Left lung (tissue), 14 donors: ENCODE measurements at regions of chr1 and their contacts with region 1.

Region 1: DNA sequence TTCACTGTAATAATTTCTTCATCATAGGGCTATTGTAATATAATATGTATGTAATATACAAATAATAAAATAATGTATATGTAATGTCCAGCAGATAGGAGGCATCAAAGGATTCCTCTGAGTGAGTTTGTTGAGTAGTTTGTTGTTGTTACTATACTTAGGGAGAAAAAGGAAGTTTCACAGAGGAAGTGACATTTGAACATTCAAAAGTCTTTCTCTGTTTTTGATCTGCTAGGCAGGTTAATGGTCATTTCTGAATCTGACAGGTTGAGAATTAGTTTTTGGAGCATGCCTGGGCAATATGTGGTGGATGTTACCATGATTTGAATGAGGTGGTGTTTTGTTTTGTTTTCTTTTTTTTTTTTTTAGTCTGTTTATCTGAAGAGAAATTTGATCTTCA is 102.1 kb downstream of the NRDC start:
- DNase-seq: no peak
- ATAC-seq: no peak
- H3K4me3 ChIP-seq: no peak overlapping the region
- H3K27ac ChIP-seq: peak overlapping the region in 1 of 2 donors; percentile 10
- H3K4me1 ChIP-seq: peaks cover 0 to 5% of the 10 kb centered on the region in 2 donors
- H3K27me3 ChIP-seq: no peaks in the 10 kb centered on the region
- CTCF ChIP-seq: no peak

Region 2: DNA sequence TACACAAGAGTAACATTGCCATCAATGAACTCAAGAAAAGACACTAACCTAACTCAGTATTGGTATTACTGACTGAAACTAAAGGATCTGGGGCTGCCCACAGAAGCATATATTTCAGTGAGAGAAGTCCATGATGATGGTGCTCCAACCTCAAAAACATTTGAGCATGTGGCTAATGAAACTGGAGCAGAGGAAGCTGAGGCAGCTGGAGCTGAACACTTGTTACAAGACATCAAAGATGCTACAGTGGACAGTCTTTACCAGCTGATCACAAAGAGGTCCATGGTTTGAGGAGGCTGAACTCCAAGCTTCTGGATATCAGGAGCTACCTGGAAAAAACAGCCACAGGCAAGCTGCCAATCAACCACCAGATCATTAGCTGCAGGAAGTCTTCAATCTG is 403.8 kb before region 1 on chr1:
- intact Hi-C with region 1: no loop called
- DNase-seq: no peak
- ATAC-seq: no peak
- H3K4me3 ChIP-seq: no peak overlapping the region
- H3K27ac ChIP-seq: no peak overlapping the region
- H3K4me1 ChIP-seq: no peaks in the 10 kb centered on the region
- H3K27me3 ChIP-seq: no peaks in the 10 kb centered on the region
- CTCF ChIP-seq: no peak

Region 3: GRCh38 chr1:51636764-51637522 is 139.5 kb before region 1 on chr1:
- intact Hi-C with region 1: loop called in 1 of 2 experiments (anchors 10 kb)
- DNase-seq: no peak
- ATAC-seq: peak; percentile 69
- H3K4me3 ChIP-seq: no peak overlapping the region
- H3K27ac ChIP-seq: no peak overlapping the region
- H3K4me1 ChIP-seq: peaks cover 0 to 20% of the 10 kb centered on the region in 2 donors
- H3K27me3 ChIP-seq: no peaks in the 10 kb centered on the region
- CTCF ChIP-seq: no peak